Esophagus squamous epithelium (tissue), 5 donors: ENCODE measurements at regions of chr12 and their contacts with region 1.

Region 1: GRCh38 chr12:75289753-75290152 is 40.4 kb downstream of the CAPS2 start:
- DNase-seq: no peak
- H3K4me3 ChIP-seq: no peak overlapping the region
- H3K27ac ChIP-seq: no peak overlapping the region
- H3K4me1 ChIP-seq: peaks cover 0 to 11% (median 0%) of the 10 kb centered on the region in 3 donors
- H3K27me3 ChIP-seq: no peaks in the 10 kb centered on the region
- CTCF ChIP-seq: peak in 3 of 6 experiments; percentile 21 to 57 (median 34)
- POLR2A ChIP-seq: no peak

Region 2: GRCh38 chr12:74801625-74802024 is 488.1 kb before region 1 on chr12:
- intact Hi-C with region 1: loop called (anchors 10 kb)
- DNase-seq: no peak
- H3K4me3 ChIP-seq: no peak overlapping the region
- H3K27ac ChIP-seq: no peak overlapping the region
- H3K4me1 ChIP-seq: no peaks in the 10 kb centered on the region
- H3K27me3 ChIP-seq: no peaks in the 10 kb centered on the region
- CTCF ChIP-seq: no peak
- POLR2A ChIP-seq: no peak